CD4-positive, alpha-beta T cell (primary cell): ENCODE measurements at regions of chr14 and their contacts with region 1.

Region 1: DNA sequence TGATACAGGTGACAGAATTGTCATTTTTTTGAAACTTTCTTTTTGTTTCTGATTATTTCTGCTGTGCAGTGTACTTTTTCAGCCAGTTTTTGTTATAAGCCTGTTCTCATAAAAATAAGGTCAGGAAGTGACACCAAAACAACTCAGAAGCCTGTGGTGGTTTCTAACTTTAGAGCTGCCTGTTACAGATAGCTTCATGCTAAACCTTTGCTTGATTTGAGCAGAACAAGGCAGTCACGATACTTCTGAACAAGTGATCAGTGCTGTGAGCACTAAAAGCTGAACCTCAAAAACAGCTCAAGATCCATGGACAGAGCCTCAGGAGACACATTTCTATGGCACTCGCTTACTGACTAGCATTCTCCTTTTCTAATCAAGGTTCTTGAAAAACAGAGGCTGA is 82.0 kb downstream of the PRKCH start:
- DNase-seq: peak in 5 of 14 experiments; percentile 14 to 80 (median 71)
- ATAC-seq: peak; percentile 80
- H3K4me3 ChIP-seq: peak overlapping the region; percentile 9
- H3K4me3 Mint-ChIP-seq: peak overlapping the region; percentile 84
- H3K27ac ChIP-seq: peak overlapping the region; percentile 23 to 77
- H3K27ac Mint-ChIP-seq: peak overlapping the region; percentile 80
- H3K4me1 ChIP-seq: peaks cover 63% of the 10 kb centered on the region
- H3K4me1 Mint-ChIP-seq: peaks cover 92% of the 10 kb centered on the region
- H3K27me3 ChIP-seq: no peaks in the 10 kb centered on the region
- H3K27me3 Mint-ChIP-seq: no peaks in the 10 kb centered on the region
- CTCF ChIP-seq: no peak

Region 2: DNA sequence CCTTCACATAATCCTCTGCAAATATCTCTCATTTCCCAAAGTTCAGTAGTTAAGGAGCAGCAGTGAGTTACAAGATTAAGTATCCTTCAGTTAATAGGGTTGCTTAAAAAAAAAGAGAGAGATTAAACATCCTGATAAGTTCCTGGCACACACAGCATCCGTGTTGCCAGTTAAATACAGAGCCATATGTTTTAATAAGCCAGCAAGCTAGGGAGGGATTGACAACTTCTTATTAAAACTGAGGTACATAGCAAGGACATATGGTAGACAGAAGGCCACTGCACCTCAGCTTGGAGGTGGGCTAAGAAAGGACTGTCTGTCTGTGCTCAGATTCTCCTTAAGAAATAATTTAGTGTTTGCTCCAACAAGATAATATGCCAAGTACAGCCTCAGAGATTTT is 112.7 kb before region 1 on chr14:
- CTCF ChIA-PET with region 1: no interaction called
- POLR2A ChIA-PET with region 1: no interaction called
- intact Hi-C with region 1: no loop called
- DNase-seq: no peak
- ATAC-seq: no peak
- H3K4me3 ChIP-seq: no peak overlapping the region
- H3K4me3 Mint-ChIP-seq: no peak overlapping the region
- H3K27ac ChIP-seq: no peak overlapping the region
- H3K27ac Mint-ChIP-seq: no peak overlapping the region
- H3K4me1 ChIP-seq: no peaks in the 10 kb centered on the region
- H3K4me1 Mint-ChIP-seq: peaks cover 8% of the 10 kb centered on the region
- H3K27me3 ChIP-seq: no peaks in the 10 kb centered on the region
- H3K27me3 Mint-ChIP-seq: no peaks in the 10 kb centered on the region
- CTCF ChIP-seq: no peak

Region 3: GRCh38 chr14:61326847-61327246 is 76.6 kb before region 1 on chr14:
- CTCF ChIA-PET with region 1: interaction called, 5 read pairs
- POLR2A ChIA-PET with region 1: interaction called, 27 read pairs
- intact Hi-C with region 1: loop called in 1 of 2 experiments (anchors 5 kb)
- DNase-seq: peak in 3 of 14 experiments; percentile 28 to 53 (median 41)
- ATAC-seq: no peak
- H3K4me3 ChIP-seq: peak overlapping the region; percentile 95
- H3K4me3 Mint-ChIP-seq: peak overlapping the region; percentile 96
- H3K27ac ChIP-seq: peak overlapping the region; percentile 54 to 75
- H3K27ac Mint-ChIP-seq: no peak overlapping the region
- H3K4me1 ChIP-seq: peaks cover 46% of the 10 kb centered on the region
- H3K4me1 Mint-ChIP-seq: peaks cover 68% of the 10 kb centered on the region
- H3K27me3 ChIP-seq: no peaks in the 10 kb centered on the region
- H3K27me3 Mint-ChIP-seq: no peaks in the 10 kb centered on the region
- CTCF ChIP-seq: no peak

Region 4: DNA sequence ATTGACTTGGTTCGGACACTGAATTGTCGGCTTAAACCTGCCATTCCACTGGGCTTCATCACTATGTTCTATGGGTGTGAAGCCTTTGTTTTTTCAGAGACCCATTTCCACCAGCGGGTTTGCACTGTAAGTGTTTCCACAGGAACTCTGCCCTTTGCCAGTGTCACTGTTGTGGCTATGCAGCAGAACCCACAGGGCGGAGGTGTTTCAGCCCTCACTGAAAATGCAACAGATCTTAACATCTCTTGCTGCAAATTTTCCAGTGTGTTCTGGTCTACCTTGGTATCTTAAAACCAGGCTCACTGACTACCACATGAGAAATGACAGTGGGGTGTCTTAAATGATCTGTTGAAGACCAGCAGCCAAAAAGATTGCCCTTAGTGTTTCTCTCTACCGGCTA is 60.9 kb before region 1 on chr14:
- CTCF ChIA-PET with region 1: no interaction called
- POLR2A ChIA-PET with region 1: interaction called, 14 read pairs
- intact Hi-C with region 1: no loop called
- DNase-seq: peak; percentile 60 to 93 (median 76)
- ATAC-seq: peak; percentile 57
- H3K4me3 ChIP-seq: peak overlapping the region; percentile 23
- H3K4me3 Mint-ChIP-seq: peak overlapping the region; percentile 87
- H3K27ac ChIP-seq: peak overlapping the region; percentile 79 to 88
- H3K27ac Mint-ChIP-seq: peak overlapping the region; percentile 99
- H3K4me1 ChIP-seq: peaks cover 90% of the 10 kb centered on the region
- H3K4me1 Mint-ChIP-seq: peaks cover 92% of the 10 kb centered on the region
- H3K27me3 ChIP-seq: no peaks in the 10 kb centered on the region
- H3K27me3 Mint-ChIP-seq: no peaks in the 10 kb centered on the region
- CTCF ChIP-seq: no peak

Region 5: DNA sequence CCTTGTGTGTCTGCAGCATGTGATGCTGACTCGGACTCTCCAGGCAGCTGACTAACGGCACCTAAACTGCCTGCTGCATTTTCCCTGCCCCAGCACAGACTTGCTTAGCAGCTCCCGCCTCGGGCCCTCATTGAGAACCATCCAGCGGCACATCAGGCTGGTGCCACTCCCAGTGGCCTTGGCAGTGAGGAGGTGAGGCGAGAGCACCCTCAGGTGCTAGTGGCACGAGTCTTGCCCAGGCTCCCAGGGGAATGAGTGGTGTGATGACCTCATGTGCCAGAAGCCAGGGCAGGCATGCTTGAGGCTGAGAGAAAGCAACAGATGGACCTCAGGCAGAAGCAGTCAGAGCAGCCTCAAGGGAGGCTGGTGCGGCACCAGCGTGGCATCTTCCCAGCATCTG is 21.9 kb before region 1 on chr14:
- CTCF ChIA-PET with region 1: no interaction called
- POLR2A ChIA-PET with region 1: interaction called, 15 read pairs
- intact Hi-C with region 1: loop called (anchors 2 kb)
- DNase-seq: no peak
- ATAC-seq: no peak
- H3K4me3 ChIP-seq: no peak overlapping the region
- H3K4me3 Mint-ChIP-seq: peak overlapping the region; percentile 47
- H3K27ac ChIP-seq: peak overlapping the region; percentile 14 to 38
- H3K27ac Mint-ChIP-seq: no peak overlapping the region
- H3K4me1 ChIP-seq: peaks cover 87% of the 10 kb centered on the region
- H3K4me1 Mint-ChIP-seq: no peaks in the 10 kb centered on the region
- H3K27me3 ChIP-seq: no peaks in the 10 kb centered on the region
- H3K27me3 Mint-ChIP-seq: no peaks in the 10 kb centered on the region
- CTCF ChIP-seq: no peak

Region 6: GRCh38 chr14:61420326-61420725 is 16.9 kb after region 1 on chr14:
- CTCF ChIA-PET with region 1: interaction called, 3 read pairs
- POLR2A ChIA-PET with region 1: interaction called, 4 read pairs
- intact Hi-C with region 1: loop called (anchors 2 kb)
- DNase-seq: peak in 5 of 14 experiments; percentile 38 to 67 (median 44)
- ATAC-seq: peak; percentile 42
- H3K4me3 ChIP-seq: no peak overlapping the region
- H3K4me3 Mint-ChIP-seq: peak overlapping the region; percentile 63
- H3K27ac ChIP-seq: peak overlapping the region in 1 of 2 donors; percentile 33
- H3K27ac Mint-ChIP-seq: no peak overlapping the region
- H3K4me1 ChIP-seq: peaks cover 76% of the 10 kb centered on the region
- H3K4me1 Mint-ChIP-seq: peaks cover 4% of the 10 kb centered on the region
- H3K27me3 ChIP-seq: no peaks in the 10 kb centered on the region
- H3K27me3 Mint-ChIP-seq: no peaks in the 10 kb centered on the region
- CTCF ChIP-seq: no peak

Region 7: GRCh38 chr14:61438860-61439684 is 35.7 kb after region 1 on chr14:
- CTCF ChIA-PET with region 1: no interaction called
- POLR2A ChIA-PET with region 1: interaction called, 4 read pairs
- intact Hi-C with region 1: loop called in 1 of 2 experiments (anchors 5 kb)
- DNase-seq: peak in 8 of 14 experiments; percentile 16 to 76 (median 54)
- ATAC-seq: peak; percentile 65
- H3K4me3 ChIP-seq: peak overlapping the region; percentile 19
- H3K4me3 Mint-ChIP-seq: peak overlapping the region; percentile 72
- H3K27ac ChIP-seq: peak overlapping the region; percentile 45 to 53
- H3K27ac Mint-ChIP-seq: peak overlapping the region; percentile 83
- H3K4me1 ChIP-seq: peaks cover 78% of the 10 kb centered on the region
- H3K4me1 Mint-ChIP-seq: peaks cover 91% of the 10 kb centered on the region
- H3K27me3 ChIP-seq: no peaks in the 10 kb centered on the region
- H3K27me3 Mint-ChIP-seq: no peaks in the 10 kb centered on the region
- CTCF ChIP-seq: no peak